ENCODE measurements at regions of chr12 and their contacts with region 1.

Region 1: GRCh38 chr12:124588751-124589267 is 21.4 kb upstream of the NCOR2 start:
- DNase-seq: peak; percentile 60 to 72 (median 60)
- ATAC-seq: peak; percentile 75 to 88
- H3K4me3 ChIP-seq: no peak overlapping the region
- H3K27ac ChIP-seq: no peak overlapping the region
- H3K4me1 ChIP-seq: no peaks in the 10 kb centered on the region
- H3K27me3 ChIP-seq: no peaks in the 10 kb centered on the region

Region 2: GRCh38 chr12:124675881-124676715 is 87.3 kb after region 1 on chr12:
- intact Hi-C with region 1: loop called in 1 of 4 experiments (anchors 5 kb)
- DNase-seq: peak; percentile 73 to 78 (median 75)
- ATAC-seq: peak; percentile 64 to 75
- H3K4me3 ChIP-seq: no peak overlapping the region
- H3K27ac ChIP-seq: peak overlapping the region; percentile 34
- H3K4me1 ChIP-seq: peaks cover 5% of the 10 kb centered on the region
- H3K27me3 ChIP-seq: no peaks in the 10 kb centered on the region